Aorta (tissue), 5 donors: ENCODE measurements at regions of chr10 and their contacts with region 1.

Region 1: DNA sequence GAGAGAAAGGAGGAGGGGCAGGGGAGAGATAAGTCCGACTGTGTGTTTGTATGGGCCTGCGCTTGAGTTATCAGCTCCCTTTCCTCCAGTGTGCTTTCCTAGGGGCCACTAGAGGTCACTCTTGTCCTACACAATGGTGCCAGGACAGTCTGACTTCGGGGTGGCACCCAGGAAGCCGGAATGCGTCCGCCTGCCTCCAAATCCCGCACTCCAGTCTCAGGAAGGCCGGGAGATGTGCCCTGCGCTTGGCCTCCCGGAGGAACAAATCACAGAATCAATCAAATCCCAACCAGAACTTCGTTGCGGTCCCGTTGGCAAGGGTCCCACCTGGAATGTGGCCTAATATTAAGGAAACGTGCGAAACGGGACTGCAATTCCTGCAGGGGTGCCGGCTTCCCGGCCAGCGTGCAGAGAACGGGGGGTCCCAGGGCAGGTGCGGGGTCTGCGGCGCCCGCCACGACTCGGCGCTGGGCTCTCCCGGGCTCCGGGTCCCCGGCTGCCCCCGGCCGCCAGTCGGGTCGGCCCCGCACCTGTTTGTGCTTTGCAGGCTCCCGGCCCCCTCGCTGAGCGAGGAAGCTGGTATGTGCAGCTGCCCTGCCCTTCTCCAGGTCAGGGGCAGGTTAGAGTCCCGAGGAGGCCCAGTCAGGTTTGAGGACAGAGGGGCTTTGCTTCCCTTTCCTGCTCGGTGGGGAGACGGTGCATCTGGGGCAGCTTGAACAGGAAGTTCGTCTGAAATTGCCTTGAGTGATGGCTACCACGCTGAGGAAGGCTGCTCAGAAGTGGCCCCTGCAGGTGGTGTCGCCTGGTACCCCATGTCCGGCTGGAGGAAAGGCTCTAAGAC is 21.0 kb upstream of the HPS1 start:
- DNase-seq: peak; percentile 76 to 84
- ATAC-seq: peak; percentile 93
- H3K4me3 ChIP-seq: peak overlapping the region; percentile 33 to 57
- H3K27ac ChIP-seq: no peak overlapping the region
- H3K4me1 ChIP-seq: no peaks in the 10 kb centered on the region
- H3K27me3 ChIP-seq: no peaks in the 10 kb centered on the region

Region 2: DNA sequence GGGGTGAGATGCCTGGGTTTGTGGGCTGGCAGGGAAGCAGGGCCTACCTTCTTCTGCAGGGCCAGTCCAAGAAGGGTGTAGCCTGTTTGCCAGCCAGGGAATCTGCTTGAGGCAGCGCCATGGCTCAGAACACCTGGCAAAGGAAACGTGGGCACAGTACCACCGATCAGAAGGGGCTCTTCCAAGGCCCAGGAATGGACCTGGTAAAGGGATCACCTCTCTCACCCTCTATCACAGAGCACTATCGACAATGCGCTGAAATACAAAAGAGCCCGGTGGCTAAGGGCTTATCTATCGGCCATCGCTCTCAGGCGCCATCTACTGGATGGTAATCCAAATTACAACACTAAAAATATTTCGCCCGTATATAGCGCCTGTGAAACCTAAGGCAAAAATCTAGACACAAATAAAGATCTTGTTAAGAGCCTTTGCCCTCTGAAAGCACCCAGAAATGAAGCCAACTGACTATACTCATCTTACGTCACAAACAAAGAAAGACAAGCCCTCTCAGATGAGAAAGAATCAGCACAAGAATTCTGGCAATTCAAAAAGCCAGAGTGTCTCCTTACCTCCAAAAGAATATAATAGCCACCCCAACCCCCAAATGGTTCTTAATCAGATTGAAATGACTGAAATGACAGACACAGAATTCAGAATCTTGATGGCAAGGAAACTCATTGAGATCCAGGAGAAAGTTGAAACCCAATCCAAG is 196.8 kb after region 1 on chr10:
- intact Hi-C with region 1: loop called in 1 of 2 experiments (anchors 5 kb)
- DNase-seq: no peak
- ATAC-seq: no peak
- H3K4me3 ChIP-seq: no peak overlapping the region
- H3K27ac ChIP-seq: no peak overlapping the region
- H3K4me1 ChIP-seq: no peaks in the 10 kb centered on the region
- H3K27me3 ChIP-seq: no peaks in the 10 kb centered on the region

Region 3: GRCh38 chr10:99172130-99172738 is 704.5 kb after region 1 on chr10:
- intact Hi-C with region 1: loop called in 1 of 2 experiments (anchors 5 kb)
- DNase-seq: peak in 1 of 2 donors; percentile 50
- ATAC-seq: no peak
- H3K4me3 ChIP-seq: no peak overlapping the region
- H3K27ac ChIP-seq: no peak overlapping the region
- H3K4me1 ChIP-seq: no peaks in the 10 kb centered on the region
- H3K27me3 ChIP-seq: no peaks in the 10 kb centered on the region

Region 4: GRCh38 chr10:99248824-99249223 is 781.1 kb after region 1 on chr10:
- intact Hi-C with region 1: loop called (anchors 2 to 5 kb)
- DNase-seq: no peak
- ATAC-seq: no peak
- H3K4me3 ChIP-seq: no peak overlapping the region
- H3K27ac ChIP-seq: no peak overlapping the region
- H3K4me1 ChIP-seq: no peaks in the 10 kb centered on the region
- H3K27me3 ChIP-seq: no peaks in the 10 kb centered on the region